Activated T-helper 1 cell treated with anti-CD3 and anti-CD28 coated beads, Interleukin-12 subunit alpha, Interleukin-12 subunit beta, Interleukin-2, Interleukin-4 antibody, amounts not matched to agents 30 ng/mL and 10 ng/mL and 1 ng/mL, durations not matched to agents 14 hours and 24 hours and 36 hours (primary cell): ENCODE measurements at regions of chr5 and their contacts with region 1.

Region 1: DNA sequence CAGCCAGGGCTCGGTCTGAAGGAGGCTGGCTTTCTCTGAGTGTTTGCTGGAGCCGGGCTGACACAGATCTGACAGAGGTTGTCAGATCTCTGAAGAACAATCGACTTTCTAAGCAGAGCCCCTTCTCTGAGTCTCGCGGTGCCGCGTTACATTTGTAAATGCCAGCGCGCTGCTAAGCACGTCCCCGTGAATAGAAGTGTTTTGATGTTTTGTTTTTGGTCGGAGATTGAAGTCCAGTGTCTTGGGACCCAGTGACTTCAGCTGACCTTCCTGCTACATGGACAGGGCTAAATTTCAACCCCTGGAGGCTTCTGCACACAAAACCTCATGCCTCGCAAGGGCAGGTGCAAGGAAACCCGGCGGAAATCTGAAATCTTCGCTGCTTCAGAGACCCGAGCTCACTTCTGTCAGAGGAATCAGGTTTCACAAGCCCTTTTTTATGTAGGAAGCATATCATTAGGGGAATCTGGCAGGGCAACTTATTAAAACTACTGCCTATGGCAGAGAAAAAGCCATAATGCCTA is 27.2 kb downstream of the NEUROG1 start:
- DNase-seq: no peak
- H3K4me3 Mint-ChIP-seq: no peak overlapping the region
- H3K27ac Mint-ChIP-seq: no peak overlapping the region
- H3K4me1 Mint-ChIP-seq: no peaks in the 10 kb centered on the region
- H3K27me3 Mint-ChIP-seq: peaks cover 38% of the 10 kb centered on the region

Region 2: GRCh38 chr5:135535820-135536801 is 27.6 kb after region 1 on chr5 and contains the start of gene NEUROG1:
- intact Hi-C with region 1: loop called (anchors 1 kb)
- DNase-seq: no peak
- H3K4me3 Mint-ChIP-seq: no peak within 1 kb of the TSS
- H3K27ac Mint-ChIP-seq: no peak within 1 kb of the TSS
- H3K4me1 Mint-ChIP-seq: no peaks in the 10 kb centered on the region
- H3K27me3 Mint-ChIP-seq: peaks cover 83% of the 10 kb centered on the region
- total RNA-seq, gene NEUROG1: not detected in 2 replicates

Region 3: GRCh38 chr5:136793300-136793699 is 1284.8 kb after region 1 on chr5:
- intact Hi-C with region 1: no loop called
- DNase-seq: no peak
- H3K4me3 Mint-ChIP-seq: no peak overlapping the region
- H3K27ac Mint-ChIP-seq: no peak overlapping the region
- H3K4me1 Mint-ChIP-seq: no peaks in the 10 kb centered on the region
- H3K27me3 Mint-ChIP-seq: no peaks in the 10 kb centered on the region